ENCODE measurements at regions of chr1 and their contacts with region 1.

Region 1: GRCh38 chr1:45026446-45026845 is 14.4 kb downstream of the UROD start:
- DNase-seq: no peak
- H3K4me3 ChIP-seq: no peak overlapping the region
- H3K27ac ChIP-seq: no peak overlapping the region
- H3K4me1 ChIP-seq: no peaks in the 10 kb centered on the region
- CTCF ChIP-seq: no peak

Region 2: GRCh38 chr1:45047032-45047431 is 20.6 kb after region 1 on chr1:
- CTCF ChIA-PET with region 1: no interaction called
- POLR2A ChIA-PET with region 1: no interaction called
- intact Hi-C with region 1: no loop called
- DNase-seq: no peak
- H3K4me3 ChIP-seq: no peak overlapping the region
- H3K27ac ChIP-seq: no peak overlapping the region
- H3K4me1 ChIP-seq: peaks cover 14% of the 10 kb centered on the region
- CTCF ChIP-seq: no peak

Region 3: DNA sequence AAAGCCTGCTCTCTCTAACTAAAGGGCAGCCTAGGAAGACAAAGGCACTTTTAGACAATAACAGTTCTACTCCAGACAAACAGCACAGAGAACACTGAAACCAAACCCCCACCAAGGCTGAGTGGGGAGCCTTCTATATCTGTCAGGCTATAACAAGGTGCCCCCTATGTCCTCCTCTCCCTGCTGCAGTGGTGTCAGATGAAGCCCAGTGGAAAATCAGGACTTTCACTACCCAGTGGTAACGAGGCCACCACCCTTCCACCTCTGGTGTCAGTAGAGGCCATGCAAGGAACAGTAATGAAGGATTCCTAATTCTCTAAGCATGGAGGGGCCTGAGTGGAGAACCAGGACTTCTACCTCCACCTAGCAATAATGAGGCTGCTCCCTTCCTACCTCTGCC is 96.3 kb after region 1 on chr1:
- CTCF ChIA-PET with region 1: no interaction called
- POLR2A ChIA-PET with region 1: no interaction called
- intact Hi-C with region 1: loop called (anchors 10 kb)
- DNase-seq: no peak
- H3K4me3 ChIP-seq: no peak overlapping the region
- H3K27ac ChIP-seq: no peak overlapping the region
- H3K4me1 ChIP-seq: no peaks in the 10 kb centered on the region
- CTCF ChIP-seq: no peak

Measured in OCI-LY7 (cell line).